Calu3 (cell line): ENCODE measurements at regions of chr12 and their contacts with region 1.

Region 1: GRCh38 chr12:74646831-74647230 is 109.2 kb downstream of the ATXN7L3B start:
- DNase-seq: peak; percentile 58
- H3K4me3 Mint-ChIP-seq: no peak overlapping the region
- H3K27ac Mint-ChIP-seq: no peak overlapping the region
- H3K4me1 Mint-ChIP-seq: no peaks in the 10 kb centered on the region
- H3K27me3 Mint-ChIP-seq: no peaks in the 10 kb centered on the region
- CTCF ChIP-seq: no peak

Region 2: DNA sequence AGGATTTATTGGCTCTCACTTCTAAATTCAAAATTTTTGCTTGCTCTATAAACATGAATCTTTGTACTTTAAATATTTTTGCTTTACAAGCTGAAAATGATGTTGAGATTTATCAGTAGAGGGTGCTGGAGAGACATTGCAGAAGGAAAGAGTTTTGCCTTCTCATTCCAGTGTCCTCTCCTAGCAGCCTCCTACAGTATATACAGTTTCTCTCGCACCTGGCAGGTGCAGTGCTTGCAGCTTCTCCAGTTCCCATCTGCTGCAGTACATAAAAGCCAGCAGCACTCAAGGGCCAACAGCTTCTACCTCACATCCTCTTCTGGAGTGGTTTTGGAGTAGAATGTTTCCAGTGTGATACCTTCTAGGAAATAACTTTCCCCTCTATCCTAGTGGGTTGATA is 711.0 kb before region 1 on chr12:
- CTCF ChIA-PET with region 1: no interaction called
- intact Hi-C with region 1: loop called (anchors 5 kb)
- DNase-seq: peak; percentile 5
- H3K4me3 Mint-ChIP-seq: no peak overlapping the region
- H3K27ac Mint-ChIP-seq: no peak overlapping the region
- H3K4me1 Mint-ChIP-seq: peaks cover 9% of the 10 kb centered on the region
- H3K27me3 Mint-ChIP-seq: no peaks in the 10 kb centered on the region
- CTCF ChIP-seq: peak; percentile 48

Region 3: GRCh38 chr12:74021937-74022336 is 624.9 kb before region 1 on chr12:
- CTCF ChIA-PET with region 1: interaction called, 9 read pairs
- intact Hi-C with region 1: loop called (anchors 5 kb)
- DNase-seq: peak; percentile 85
- H3K4me3 Mint-ChIP-seq: no peak overlapping the region
- H3K27ac Mint-ChIP-seq: no peak overlapping the region
- H3K4me1 Mint-ChIP-seq: peaks cover 10% of the 10 kb centered on the region
- H3K27me3 Mint-ChIP-seq: no peaks in the 10 kb centered on the region
- CTCF ChIP-seq: peak; percentile 64

Region 4: GRCh38 chr12:74111688-74112360 is 535.0 kb before region 1 on chr12:
- CTCF ChIA-PET with region 1: no interaction called
- intact Hi-C with region 1: loop called (anchors 1 kb)
- DNase-seq: peak; percentile 66
- H3K4me3 Mint-ChIP-seq: no peak overlapping the region
- H3K27ac Mint-ChIP-seq: no peak overlapping the region
- H3K4me1 Mint-ChIP-seq: no peaks in the 10 kb centered on the region
- H3K27me3 Mint-ChIP-seq: no peaks in the 10 kb centered on the region
- CTCF ChIP-seq: peak; percentile 43

Region 5: DNA sequence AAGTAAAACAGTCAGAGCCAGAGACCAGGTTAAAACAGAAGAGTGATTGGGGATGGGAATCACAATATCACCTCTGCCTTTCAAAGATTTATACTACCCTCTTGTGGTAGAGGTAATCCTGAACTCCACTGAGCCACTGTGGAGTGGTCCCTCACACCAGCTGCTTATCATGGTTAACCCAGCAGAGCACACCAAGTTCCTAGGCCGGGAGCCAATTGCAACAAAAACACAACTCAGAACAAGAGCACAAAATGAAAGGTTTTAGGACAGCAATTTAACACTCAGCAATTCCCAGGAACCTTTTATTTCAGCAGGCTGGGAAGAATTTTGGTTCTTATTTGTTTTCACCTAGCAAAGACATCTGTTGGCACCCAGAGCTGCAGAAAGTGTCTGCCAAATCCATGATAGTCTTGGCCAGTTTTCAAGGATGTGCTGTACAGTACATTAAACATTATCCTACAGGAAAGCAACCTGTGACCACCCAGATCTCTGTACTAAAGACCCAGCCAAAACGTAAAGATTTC is 329.7 kb before region 1 on chr12:
- CTCF ChIA-PET with region 1: interaction called, 5 read pairs
- intact Hi-C with region 1: loop called (anchors 5 kb)
- DNase-seq: peak; percentile 52
- H3K4me3 Mint-ChIP-seq: no peak overlapping the region
- H3K27ac Mint-ChIP-seq: no peak overlapping the region
- H3K4me1 Mint-ChIP-seq: peaks cover 17% of the 10 kb centered on the region
- H3K27me3 Mint-ChIP-seq: no peaks in the 10 kb centered on the region
- CTCF ChIP-seq: peak; percentile 51

Region 6: DNA sequence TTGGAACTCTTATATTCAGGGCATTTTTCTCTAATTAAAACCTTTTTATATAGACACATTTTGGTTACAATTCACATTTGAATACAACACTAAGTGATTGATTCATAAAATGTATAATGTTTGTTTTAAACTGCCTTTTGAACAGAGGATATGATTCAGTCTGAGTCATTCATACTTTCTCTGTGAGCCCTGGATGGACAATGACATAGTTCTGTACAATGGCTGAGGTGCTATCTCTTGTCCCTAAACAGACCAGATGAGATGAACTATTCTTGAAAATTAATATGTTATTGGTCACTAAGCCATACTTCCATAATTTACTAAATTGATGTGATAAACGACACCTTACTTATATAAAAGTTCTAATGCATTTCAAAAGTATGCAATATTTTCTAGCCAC is 308.9 kb before region 1 on chr12:
- CTCF ChIA-PET with region 1: no interaction called
- intact Hi-C with region 1: loop called (anchors 5 kb)
- DNase-seq: peak; percentile 24
- H3K4me3 Mint-ChIP-seq: no peak overlapping the region
- H3K27ac Mint-ChIP-seq: peak overlapping the region; percentile 43
- H3K4me1 Mint-ChIP-seq: peaks cover 41% of the 10 kb centered on the region
- H3K27me3 Mint-ChIP-seq: no peaks in the 10 kb centered on the region
- CTCF ChIP-seq: no peak

Region 7: GRCh38 chr12:74537707-74538385 is 109.0 kb before region 1 on chr12 and contains the start of gene ATXN7L3B:
- CTCF ChIA-PET with region 1: interaction called, 14 read pairs
- intact Hi-C with region 1: loop called (anchors 1 kb)
- DNase-seq: peak; percentile 98
- H3K4me3 Mint-ChIP-seq: peak within 1 kb of the TSS; percentile 99
- H3K27ac Mint-ChIP-seq: peak within 1 kb of the TSS; percentile 100
- H3K4me1 Mint-ChIP-seq: peaks cover 22% of the 10 kb centered on the region
- H3K27me3 Mint-ChIP-seq: no peaks in the 10 kb centered on the region
- CTCF ChIP-seq: no peak
- total RNA-seq, gene ATXN7L3B: 50.6 and 59.7 TPM in 2 replicates

Region 8: GRCh38 chr12:74608231-74608775 is 38.5 kb before region 1 on chr12:
- CTCF ChIA-PET with region 1: no interaction called
- intact Hi-C with region 1: no loop called
- DNase-seq: no peak
- H3K4me3 Mint-ChIP-seq: no peak overlapping the region
- H3K27ac Mint-ChIP-seq: no peak overlapping the region
- H3K4me1 Mint-ChIP-seq: peaks cover 10% of the 10 kb centered on the region
- H3K27me3 Mint-ChIP-seq: no peaks in the 10 kb centered on the region
- CTCF ChIP-seq: no peak